A673 (cell line): ENCODE measurements at regions of chr1 and their contacts with region 1.

Region 1: DNA sequence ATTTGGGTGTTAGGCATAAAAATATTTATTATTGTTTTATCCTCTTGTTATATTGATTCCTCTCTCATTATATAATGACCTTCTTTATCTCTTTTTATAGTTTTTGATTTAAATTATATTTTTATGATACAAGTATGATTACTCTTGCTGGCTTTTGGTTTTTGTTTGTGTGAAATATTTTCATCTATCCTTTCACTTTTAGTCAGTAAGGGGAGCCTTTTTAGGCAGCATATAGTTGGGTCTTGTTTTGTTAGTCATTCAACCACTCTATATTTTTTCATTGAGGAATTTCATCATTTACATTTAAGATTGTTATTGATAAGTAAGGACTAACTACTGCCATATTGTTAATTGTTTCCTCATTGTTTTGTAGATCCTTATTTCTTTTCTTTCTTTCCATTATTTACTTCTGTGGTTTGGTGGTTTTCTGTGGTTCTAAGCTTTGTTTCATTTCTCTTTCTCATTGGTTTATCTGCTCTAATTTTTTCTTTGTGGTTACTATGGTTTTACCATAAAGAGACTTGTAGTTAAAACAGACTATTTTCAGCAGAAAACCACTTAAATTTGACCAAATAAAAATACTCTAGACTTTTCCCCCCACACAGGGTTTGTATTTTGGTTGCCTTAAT is 593.1 kb downstream of the NUF2 start:
- DNase-seq: no peak
- H3K4me3 ChIP-seq: no peak overlapping the region
- H3K27ac ChIP-seq: no peak overlapping the region
- H3K4me1 ChIP-seq: no peaks in the 10 kb centered on the region
- H3K27me3 ChIP-seq: no peaks in the 10 kb centered on the region
- CTCF ChIP-seq: no peak

Region 2: DNA sequence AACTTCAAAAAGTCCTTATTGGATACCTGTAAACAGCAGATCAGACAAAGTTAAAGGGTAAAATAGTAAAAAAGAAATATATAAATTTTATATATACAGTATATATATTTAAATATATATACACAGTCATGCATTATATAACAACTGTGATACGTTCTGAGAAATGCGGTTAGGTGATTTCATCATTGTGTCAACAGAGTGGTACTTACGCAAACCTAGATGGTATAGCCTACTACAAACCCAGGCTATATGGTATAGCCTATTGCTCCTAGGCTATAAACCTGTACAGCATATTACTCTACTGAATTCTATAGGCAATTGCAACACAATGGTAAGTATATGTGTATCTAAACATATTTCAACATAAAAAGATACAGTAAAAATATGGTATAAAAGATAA is 370.5 kb before region 1 on chr1:
- CTCF ChIA-PET with region 1: no interaction called
- POLR2A ChIA-PET with region 1: no interaction called
- intact Hi-C with region 1: no loop called
- DNase-seq: no peak
- H3K4me3 ChIP-seq: no peak overlapping the region
- H3K27ac ChIP-seq: no peak overlapping the region
- H3K4me1 ChIP-seq: no peaks in the 10 kb centered on the region
- H3K27me3 ChIP-seq: no peaks in the 10 kb centered on the region
- CTCF ChIP-seq: no peak

Region 3: GRCh38 chr1:163970699-163971098 is 55.8 kb after region 1 on chr1:
- CTCF ChIA-PET with region 1: no interaction called
- POLR2A ChIA-PET with region 1: no interaction called
- intact Hi-C with region 1: no loop called
- DNase-seq: no peak
- H3K4me3 ChIP-seq: no peak overlapping the region
- H3K27ac ChIP-seq: no peak overlapping the region
- H3K4me1 ChIP-seq: no peaks in the 10 kb centered on the region
- H3K27me3 ChIP-seq: no peaks in the 10 kb centered on the region
- CTCF ChIP-seq: no peak

Region 4: GRCh38 chr1:164272141-164272540 is 357.2 kb after region 1 on chr1:
- CTCF ChIA-PET with region 1: no interaction called
- POLR2A ChIA-PET with region 1: interaction called, 23 read pairs
- intact Hi-C with region 1: no loop called
- DNase-seq: peak; percentile 5
- H3K4me3 ChIP-seq: no peak overlapping the region
- H3K27ac ChIP-seq: no peak overlapping the region
- H3K4me1 ChIP-seq: no peaks in the 10 kb centered on the region
- H3K27me3 ChIP-seq: no peaks in the 10 kb centered on the region
- CTCF ChIP-seq: no peak